ENCODE measurements at regions of chr11 and their contacts with region 1.

Region 1: GRCh38 chr11:35714882-35715627 is 52.5 kb downstream of the TRIM44 start:
- DNase-seq: peak; percentile 32
- H3K4me3 ChIP-seq: no peak overlapping the region
- H3K27ac ChIP-seq: no peak overlapping the region
- H3K4me1 ChIP-seq: no peaks in the 10 kb centered on the region
- H3K27me3 ChIP-seq: no peaks in the 10 kb centered on the region
- CTCF ChIP-seq: no peak

Region 2: DNA sequence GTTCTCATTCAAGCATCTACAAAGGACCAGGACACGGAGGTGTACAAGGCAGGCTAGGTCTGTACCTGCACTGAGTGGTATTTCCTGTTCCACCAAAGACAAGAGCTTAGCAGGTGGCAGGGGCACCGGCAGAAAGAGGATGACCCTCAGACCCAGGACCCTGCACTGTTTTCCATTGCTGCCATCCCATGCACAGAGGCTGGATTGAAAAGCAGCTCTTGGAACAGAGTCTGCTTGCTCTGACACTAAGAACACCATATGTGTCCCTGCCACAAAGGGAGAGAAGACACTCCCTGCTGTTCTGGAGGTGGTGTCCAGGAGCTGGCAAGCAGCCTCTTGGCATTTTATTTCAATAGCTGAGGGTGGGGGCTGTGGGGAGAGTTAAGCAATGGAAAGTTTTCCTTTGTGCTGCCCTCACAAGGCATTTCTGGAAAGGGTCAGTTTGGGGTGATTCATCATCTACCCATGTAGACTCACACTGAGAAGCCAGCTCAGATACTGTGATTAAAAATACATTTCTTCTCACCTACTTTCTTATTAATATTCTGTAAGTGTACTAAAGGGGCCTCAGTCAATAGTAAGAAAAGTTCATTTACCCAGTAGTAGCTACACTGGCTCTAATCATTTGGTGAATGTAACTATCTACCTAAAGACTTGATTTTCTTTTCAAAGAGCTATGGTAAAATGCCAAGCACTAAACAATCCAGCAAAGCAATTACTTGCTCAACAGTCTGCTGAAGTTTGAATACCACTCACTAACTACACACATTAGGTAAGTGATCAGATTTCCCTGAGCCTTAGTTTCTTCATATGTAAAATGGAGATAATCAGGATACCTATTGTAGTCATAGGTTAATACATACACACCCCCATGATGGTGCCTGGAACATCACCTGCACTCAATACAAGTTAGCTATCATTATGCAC is 350.9 kb before region 1 on chr11:
- CTCF ChIA-PET with region 1: no interaction called
- dilution Hi-C with region 1: no loop called
- in situ Hi-C with region 1: no loop called
- intact Hi-C with region 1: no loop called
- DNase-seq: peak; percentile 85
- H3K4me3 ChIP-seq: no peak overlapping the region
- H3K27ac ChIP-seq: no peak overlapping the region
- H3K4me1 ChIP-seq: peaks cover 21% of the 10 kb centered on the region
- H3K27me3 ChIP-seq: no peaks in the 10 kb centered on the region
- CTCF ChIP-seq: no peak

Region 3: DNA sequence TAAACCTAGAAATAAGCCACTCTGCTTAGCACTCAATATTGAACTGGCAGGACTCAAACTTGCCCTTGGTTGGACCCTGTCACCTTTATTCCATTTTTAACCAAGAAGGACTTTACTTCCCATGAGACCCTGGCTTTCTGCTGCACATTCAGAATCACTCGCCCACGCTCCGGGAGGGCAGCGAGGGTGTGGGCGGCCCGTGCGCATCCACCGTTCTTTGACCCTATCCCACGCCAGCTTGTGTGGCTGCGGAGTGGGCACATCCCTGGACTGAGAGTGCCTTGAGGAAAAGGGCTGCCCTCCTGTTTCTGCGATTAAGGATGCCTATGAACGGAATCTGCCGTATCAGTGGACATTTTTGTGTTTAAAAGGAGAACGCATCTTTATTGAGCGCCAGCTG is 12.9 kb before region 1 on chr11:
- CTCF ChIA-PET with region 1: no interaction called
- dilution Hi-C with region 1: no loop called
- in situ Hi-C with region 1: no loop called
- intact Hi-C with region 1: no loop called
- DNase-seq: no peak
- H3K4me3 ChIP-seq: no peak overlapping the region
- H3K27ac ChIP-seq: no peak overlapping the region
- H3K4me1 ChIP-seq: no peaks in the 10 kb centered on the region
- H3K27me3 ChIP-seq: no peaks in the 10 kb centered on the region
- CTCF ChIP-seq: no peak

Region 4: DNA sequence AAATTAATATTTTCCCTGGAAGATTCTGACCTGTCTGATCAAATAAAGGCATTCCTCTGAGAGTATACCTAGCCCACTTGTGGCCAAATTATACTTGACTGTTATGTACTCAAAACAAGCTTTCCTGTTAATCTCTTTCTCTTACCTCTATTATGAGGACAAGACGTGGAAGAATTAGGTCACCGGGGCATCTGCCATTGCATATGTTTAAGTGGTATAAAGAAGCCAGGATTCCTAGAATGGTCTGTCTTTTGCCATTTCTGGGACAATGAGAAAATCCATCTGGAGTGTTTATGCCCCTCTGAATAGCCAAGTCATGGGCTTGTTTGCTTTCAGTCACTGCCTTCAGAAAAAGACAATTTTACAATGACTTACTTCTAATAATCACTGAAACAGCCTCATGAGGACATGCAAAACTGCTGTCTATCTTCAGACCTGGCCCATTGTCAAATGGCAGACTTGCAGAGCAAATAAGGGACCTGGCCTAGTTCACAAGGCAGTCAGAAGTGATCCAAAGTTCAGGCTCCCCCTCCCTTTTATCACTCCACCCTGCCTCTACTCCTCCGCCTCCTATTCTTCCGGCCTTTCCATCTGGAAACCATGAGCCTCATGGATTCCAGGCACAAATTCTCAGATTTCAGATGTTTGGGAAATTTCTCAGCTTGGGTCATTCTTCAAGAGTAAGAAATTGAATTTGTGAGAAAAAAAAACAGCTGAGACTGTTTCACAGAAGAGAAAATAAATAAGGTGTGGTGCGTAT is 100.7 kb after region 1 on chr11:
- CTCF ChIA-PET with region 1: no interaction called
- dilution Hi-C with region 1: loop called (anchors 5 kb)
- in situ Hi-C with region 1: no loop called
- intact Hi-C with region 1: no loop called
- DNase-seq: no peak
- H3K4me3 ChIP-seq: no peak overlapping the region
- H3K27ac ChIP-seq: no peak overlapping the region
- H3K4me1 ChIP-seq: peaks cover 9% of the 10 kb centered on the region
- H3K27me3 ChIP-seq: no peaks in the 10 kb centered on the region
- CTCF ChIP-seq: no peak

Region 5: DNA sequence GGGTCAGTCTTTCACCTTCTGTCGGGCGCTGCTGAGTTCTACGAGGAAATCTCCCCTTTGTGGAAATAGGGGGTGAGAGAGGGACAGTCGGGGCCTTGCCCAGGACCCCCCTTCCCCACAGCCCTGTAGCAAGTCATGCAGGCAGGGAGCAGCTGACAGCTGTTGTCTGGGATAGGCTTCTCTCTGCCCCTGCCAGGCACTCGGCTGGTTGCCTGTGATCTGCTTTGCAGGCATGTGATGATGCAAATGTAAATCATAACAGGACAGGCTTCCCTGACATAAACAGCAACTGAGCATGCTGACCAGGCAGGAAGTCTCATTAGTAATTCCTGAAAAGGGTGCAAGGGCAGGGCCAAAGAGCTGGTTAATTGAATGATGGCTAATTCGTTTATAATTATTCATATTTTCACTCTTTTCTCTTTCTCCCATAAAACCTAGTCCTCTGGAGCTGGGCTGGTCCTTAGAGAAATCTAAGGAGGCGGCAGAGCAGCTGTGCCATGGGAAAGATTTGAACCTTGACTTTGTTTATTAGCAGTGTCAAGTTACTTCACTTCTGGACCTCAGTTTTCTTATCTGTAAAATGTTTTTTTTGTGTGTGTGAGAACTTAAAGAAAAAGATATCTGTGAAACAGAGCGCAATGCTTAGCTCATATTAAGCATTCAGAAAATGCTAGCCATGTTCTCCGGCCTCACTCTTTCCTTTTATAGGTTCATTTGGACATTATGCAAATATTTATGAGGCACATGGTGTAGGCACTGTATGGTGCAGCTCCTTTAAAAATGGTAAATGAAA is 358.6 kb after region 1 on chr11:
- CTCF ChIA-PET with region 1: no interaction called
- dilution Hi-C with region 1: no loop called
- in situ Hi-C with region 1: no loop called
- intact Hi-C with region 1: loop called (anchors 5 kb)
- DNase-seq: peak; percentile 30
- H3K4me3 ChIP-seq: no peak overlapping the region
- H3K27ac ChIP-seq: no peak overlapping the region
- H3K4me1 ChIP-seq: peaks cover 18% of the 10 kb centered on the region
- H3K27me3 ChIP-seq: no peaks in the 10 kb centered on the region
- CTCF ChIP-seq: no peak